ENCODE measurements at regions of chr3 and their contacts with region 1.

Region 1: DNA sequence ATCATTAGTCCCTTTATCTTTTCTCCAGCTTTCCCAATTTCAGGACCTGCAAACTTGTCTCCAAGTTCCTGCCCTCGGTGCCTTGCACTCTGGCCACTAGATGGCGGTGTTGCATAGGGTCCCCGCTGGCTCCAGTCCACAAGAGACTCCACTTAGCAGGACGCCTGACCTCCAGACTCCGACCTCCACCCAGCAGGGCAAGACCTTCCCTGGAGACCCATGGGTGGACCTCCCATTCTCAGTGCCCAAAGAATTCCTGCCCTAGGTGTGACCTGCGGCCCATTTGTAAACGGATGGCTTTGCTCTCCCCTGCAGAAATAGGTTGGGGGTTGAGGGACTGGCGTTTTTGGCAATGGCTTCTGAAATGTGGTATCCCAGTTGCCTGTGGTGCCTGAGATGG is 82.6 kb downstream of the LSM3 start:
- DNase-seq: peak; percentile 78 to 91
- ATAC-seq: peak; percentile 84 to 93 (median 88)
- H3K4me3 ChIP-seq: no peak overlapping the region
- H3K27ac ChIP-seq: no peak overlapping the region
- H3K4me1 ChIP-seq: peaks cover 3% of the 10 kb centered on the region
- H3K27me3 ChIP-seq: no peaks in the 10 kb centered on the region
- CTCF ChIP-seq: peak; percentile 99

Region 2: GRCh38 chr3:14124615-14125190 is 136.5 kb before region 1 on chr3 and contains the starts of genes CHCHD4 and TMEM43:
- intact Hi-C with region 1: no loop called
- DNase-seq: peak; percentile 100
- ATAC-seq: peak; percentile 78 to 93 (median 85)
- H3K4me3 ChIP-seq: peak within 1 kb of the TSS; percentile 98
- H3K27ac ChIP-seq: peak within 1 kb of the TSS; percentile 97
- H3K4me1 ChIP-seq: peaks cover 30% of the 10 kb centered on the region
- H3K27me3 ChIP-seq: no peaks in the 10 kb centered on the region
- CTCF ChIP-seq: no peak
- total RNA-seq, gene CHCHD4: 18.5 to 26.8 (median 19.5) TPM
- total RNA-seq, gene TMEM43: 28.2 to 107 (median 34.2) TPM

Region 3: GRCh38 chr3:14210843-14211594 is 50.2 kb before region 1 on chr3:
- intact Hi-C with region 1: loop called in 1 of 2 experiments (anchors 2 kb)
- DNase-seq: no peak
- ATAC-seq: no peak
- H3K4me3 ChIP-seq: no peak overlapping the region
- H3K27ac ChIP-seq: no peak overlapping the region
- H3K4me1 ChIP-seq: peaks cover 6% of the 10 kb centered on the region
- H3K27me3 ChIP-seq: no peaks in the 10 kb centered on the region
- CTCF ChIP-seq: no peak

Region 4: GRCh38 chr3:14461748-14462324 is 200.6 kb after region 1 on chr3:
- intact Hi-C with region 1: loop called in 1 of 2 experiments (anchors 2 kb)
- DNase-seq: no peak
- ATAC-seq: peak; percentile 26 to 58 (median 36)
- H3K4me3 ChIP-seq: no peak overlapping the region
- H3K27ac ChIP-seq: no peak overlapping the region
- H3K4me1 ChIP-seq: peaks cover 23% of the 10 kb centered on the region
- H3K27me3 ChIP-seq: no peaks in the 10 kb centered on the region
- CTCF ChIP-seq: peak; percentile 39

Region 5: DNA sequence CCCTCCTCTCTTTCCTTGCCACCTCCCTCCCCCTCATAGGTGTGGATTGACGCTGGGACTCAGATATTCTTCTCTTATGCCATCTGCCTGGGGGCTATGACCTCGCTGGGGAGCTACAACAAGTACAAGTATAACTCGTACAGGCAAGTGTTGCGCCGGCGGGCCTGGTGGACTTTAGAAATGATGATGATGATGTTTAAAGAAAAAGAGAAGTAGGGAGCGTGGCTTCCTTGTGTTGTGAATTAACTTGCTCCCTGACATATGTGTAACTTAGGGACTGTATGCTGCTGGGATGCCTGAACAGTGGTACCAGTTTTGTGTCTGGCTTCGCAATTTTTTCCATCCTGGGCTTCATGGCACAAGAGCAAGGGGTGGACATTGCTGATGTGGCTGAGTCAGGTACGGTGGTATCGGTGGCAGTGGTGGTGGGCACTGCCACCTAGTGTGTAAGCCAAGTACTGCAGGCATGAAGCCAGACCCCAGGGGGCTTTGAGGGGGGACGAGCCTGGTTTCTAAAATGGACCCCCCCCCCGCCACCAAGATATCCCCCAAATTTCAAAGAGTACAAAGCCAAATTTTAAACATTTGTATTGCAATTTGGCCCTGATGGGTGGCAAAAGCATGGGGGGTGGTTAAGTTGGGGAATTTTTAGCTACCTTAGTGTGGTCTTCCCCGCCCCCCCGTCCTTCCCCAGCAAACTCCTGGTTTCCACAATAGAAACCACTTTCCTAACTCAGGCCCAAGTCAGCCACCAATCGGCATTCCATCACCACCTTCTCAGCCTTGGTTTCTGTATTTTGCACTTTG is 206.8 kb after region 1 on chr3:
- intact Hi-C with region 1: loop called (anchors 1 to 2 kb)
- DNase-seq: no peak
- ATAC-seq: peak; percentile 64 to 84 (median 72)
- H3K4me3 ChIP-seq: no peak overlapping the region
- H3K27ac ChIP-seq: no peak overlapping the region
- H3K4me1 ChIP-seq: peaks cover 8% of the 10 kb centered on the region
- H3K27me3 ChIP-seq: no peaks in the 10 kb centered on the region
- CTCF ChIP-seq: peak; percentile 86